Naive thymus-derived CD4-positive, alpha-beta T cell (primary cell): ENCODE measurements at regions of chr14 and their contacts with region 1.

Region 1: DNA sequence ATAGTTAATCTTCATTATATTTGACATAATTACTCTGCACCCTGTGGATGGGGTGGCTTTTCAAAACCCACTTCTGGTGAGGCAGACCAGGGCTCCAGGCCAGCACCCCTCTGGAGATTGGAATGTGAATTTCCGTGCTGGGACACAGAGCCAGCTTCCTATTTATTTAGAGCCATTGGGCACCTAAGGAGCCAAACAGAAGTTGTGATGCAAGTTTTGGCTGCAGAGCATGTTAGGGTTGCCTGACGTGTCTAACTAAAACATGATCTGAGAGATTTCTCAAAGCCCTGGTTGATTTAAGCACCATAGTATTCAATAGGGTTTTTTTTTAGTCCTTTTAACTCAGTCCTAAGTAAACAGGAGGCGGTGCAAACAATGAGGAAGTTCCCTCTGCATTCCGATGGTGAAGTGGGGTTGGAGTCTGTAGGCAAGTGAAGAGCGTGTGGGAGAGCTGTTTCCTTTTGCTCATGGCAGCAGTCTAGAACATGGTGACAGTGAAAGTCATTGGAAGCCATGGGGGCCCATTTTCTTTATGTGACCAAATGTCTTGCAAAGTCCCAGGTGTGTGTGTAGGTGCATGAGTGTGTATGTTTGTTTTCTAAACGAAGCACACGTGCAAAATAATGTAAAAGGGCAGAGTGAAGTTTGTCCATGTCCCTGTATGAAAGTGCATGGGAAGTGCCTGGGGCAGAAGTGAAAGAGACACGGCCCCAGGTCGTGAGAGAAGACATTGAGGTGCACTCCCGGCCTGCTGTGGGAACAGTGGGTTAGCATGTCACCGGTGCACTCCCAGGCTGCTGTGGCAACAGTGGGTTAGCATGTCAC is 117.7 kb downstream of the PRKCH start:
- DNase-seq: peak in 7 of 9 donors; percentile 23 to 53 (median 31)
- ATAC-seq: peak; percentile 75
- H3K4me3 ChIP-seq: peak overlapping the region; percentile 45
- H3K4me3 Mint-ChIP-seq: peak overlapping the region; percentile 76 to 88 (median 85)
- H3K27ac ChIP-seq: peak overlapping the region; percentile 64
- H3K27ac Mint-ChIP-seq: peak overlapping the region in 7 of 9 donors; percentile 77 to 96 (median 88)
- H3K4me1 ChIP-seq: peaks cover 74 to 89% of the 10 kb centered on the region in 2 donors
- H3K4me1 Mint-ChIP-seq: peaks cover 58 to 96% (median 90%) of the 10 kb centered on the region in 7 donors
- H3K27me3 ChIP-seq: no peaks in the 10 kb centered on the region
- H3K27me3 Mint-ChIP-seq: no peaks in the 10 kb centered on the region

Region 2: GRCh38 chr14:61388173-61388975 is 50.7 kb before region 1 on chr14:
- CTCF ChIA-PET with region 1: interaction called, 3 read pairs
- POLR2A ChIA-PET with region 1: interaction called, 3 read pairs
- intact Hi-C with region 1: loop called (anchors 2 to 10 kb)
- DNase-seq: peak in 6 of 9 donors; percentile 38 to 56 (median 50)
- ATAC-seq: peak; percentile 76
- H3K4me3 ChIP-seq: peak overlapping the region; percentile 50
- H3K4me3 Mint-ChIP-seq: peak overlapping the region in 1 of 10 donors; percentile 74
- H3K27ac ChIP-seq: peak overlapping the region; percentile 71
- H3K27ac Mint-ChIP-seq: no peak overlapping the region
- H3K4me1 ChIP-seq: peaks cover 93 to 96% of the 10 kb centered on the region in 2 donors
- H3K4me1 Mint-ChIP-seq: peaks cover 0 to 46% (median 12%) of the 10 kb centered on the region in 7 donors
- H3K27me3 ChIP-seq: no peaks in the 10 kb centered on the region
- H3K27me3 Mint-ChIP-seq: no peaks in the 10 kb centered on the region